Gastrocnemius medialis (tissue), 4 donors: ENCODE measurements at regions of chr1 and their contacts with region 1.

Region 1: DNA sequence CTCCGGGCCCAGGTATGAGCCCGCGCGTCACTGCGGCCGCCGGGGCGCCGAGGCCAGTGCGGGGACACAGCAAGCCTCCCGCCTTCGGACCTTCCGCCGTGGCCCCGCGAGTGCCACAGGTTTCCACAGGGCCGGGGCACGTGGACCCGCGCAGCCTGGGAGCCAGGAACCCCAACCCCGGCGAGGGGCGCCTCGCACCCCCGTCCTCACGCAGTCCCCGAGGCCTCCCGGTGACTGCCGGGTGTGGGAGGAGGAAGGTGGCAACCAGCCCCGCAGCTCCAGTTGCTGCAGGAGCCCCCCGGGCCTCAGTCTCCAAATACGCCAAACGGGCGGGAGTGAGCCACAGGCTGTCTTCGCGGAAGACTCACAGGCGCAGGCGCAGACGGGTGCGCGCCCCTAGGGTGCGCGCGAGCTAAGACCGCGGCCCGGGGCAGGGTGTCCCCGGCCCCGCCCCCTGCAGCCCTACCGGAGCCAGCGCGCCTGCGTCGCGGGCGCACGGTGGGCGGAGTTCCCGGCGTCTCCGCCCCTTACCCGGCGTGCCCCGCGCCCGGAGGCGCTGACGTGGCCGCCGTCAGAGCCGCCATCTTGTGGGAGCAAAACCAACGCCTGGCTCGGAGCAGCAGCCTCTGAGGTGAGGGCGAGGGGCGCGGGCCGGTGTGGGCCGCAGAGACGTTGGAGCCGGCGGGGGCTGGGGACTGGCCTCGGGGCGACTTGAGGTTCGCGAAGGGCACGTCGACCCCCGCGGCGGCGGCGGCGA is at the start of gene ARF1:
- DNase-seq: peak; percentile 83 to 86
- ATAC-seq: peak; percentile 75 to 76
- H3K4me3 ChIP-seq: peak within 1 kb of the TSS; percentile 70 to 94 (median 93)
- H3K27ac ChIP-seq: peak within 1 kb of the TSS; percentile 89 to 96 (median 92)
- H3K4me1 ChIP-seq: peaks cover 41 to 47% of the 10 kb centered on the region in 2 donors
- H3K27me3 ChIP-seq: no peaks in the 10 kb centered on the region
- CTCF ChIP-seq: peak in 2 of 5 experiments; percentile 14 to 42
- POLR2A ChIP-seq: peak; percentile 94 to 97
- total RNA-seq, gene ARF1: 234 to 422 (median 306) TPM

Region 2: DNA sequence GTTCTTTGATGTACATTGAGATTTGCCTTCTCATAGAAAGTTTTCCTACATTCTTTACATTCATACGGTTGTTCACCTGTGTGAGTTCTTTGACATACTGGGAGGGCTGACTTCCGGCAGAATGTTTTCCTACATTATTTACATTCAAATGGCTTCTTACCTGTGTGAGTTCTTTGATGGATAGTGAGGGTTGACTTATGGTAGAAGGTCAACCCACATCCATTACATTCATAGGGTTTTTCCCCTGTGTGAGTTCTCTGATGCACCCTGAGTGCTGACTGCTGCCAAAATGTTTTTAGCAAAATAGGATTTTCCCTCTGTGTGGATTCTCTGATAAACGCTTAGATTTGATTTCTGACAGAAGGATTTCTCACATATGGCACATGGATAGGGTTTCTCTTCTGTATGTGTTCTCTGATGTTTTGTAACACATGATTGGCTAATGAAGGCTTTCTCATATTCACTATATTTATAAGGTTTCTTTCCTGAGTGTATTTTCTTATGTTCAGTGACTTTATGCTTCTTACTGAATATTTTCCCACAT is 384.9 kb before region 1 on chr1:
- in situ Hi-C with region 1: no loop called
- intact Hi-C with region 1: no loop called
- DNase-seq: no peak
- ATAC-seq: no peak
- H3K4me3 ChIP-seq: no peak overlapping the region
- H3K27ac ChIP-seq: no peak overlapping the region
- H3K4me1 ChIP-seq: no peaks in the 10 kb centered on the region
- H3K27me3 ChIP-seq: peaks cover 0 to 5% (median 0%) of the 10 kb centered on the region in 3 donors
- CTCF ChIP-seq: no peak
- POLR2A ChIP-seq: no peak

Region 3: GRCh38 chr1:227762233-227762911 is 319.9 kb before region 1 on chr1:
- in situ Hi-C with region 1: loop called in 1 of 4 experiments (anchors 25 kb)
- intact Hi-C with region 1: loop called (anchors 10 kb)
- DNase-seq: peak; percentile 71 to 85
- ATAC-seq: peak; percentile 27 to 40
- H3K4me3 ChIP-seq: no peak overlapping the region
- H3K27ac ChIP-seq: peak overlapping the region; percentile 90 to 95 (median 92)
- H3K4me1 ChIP-seq: peaks cover 48 to 54% of the 10 kb centered on the region in 2 donors
- H3K27me3 ChIP-seq: no peaks in the 10 kb centered on the region
- CTCF ChIP-seq: peak; percentile 91 to 94 (median 93)
- POLR2A ChIP-seq: no peak

Region 4: DNA sequence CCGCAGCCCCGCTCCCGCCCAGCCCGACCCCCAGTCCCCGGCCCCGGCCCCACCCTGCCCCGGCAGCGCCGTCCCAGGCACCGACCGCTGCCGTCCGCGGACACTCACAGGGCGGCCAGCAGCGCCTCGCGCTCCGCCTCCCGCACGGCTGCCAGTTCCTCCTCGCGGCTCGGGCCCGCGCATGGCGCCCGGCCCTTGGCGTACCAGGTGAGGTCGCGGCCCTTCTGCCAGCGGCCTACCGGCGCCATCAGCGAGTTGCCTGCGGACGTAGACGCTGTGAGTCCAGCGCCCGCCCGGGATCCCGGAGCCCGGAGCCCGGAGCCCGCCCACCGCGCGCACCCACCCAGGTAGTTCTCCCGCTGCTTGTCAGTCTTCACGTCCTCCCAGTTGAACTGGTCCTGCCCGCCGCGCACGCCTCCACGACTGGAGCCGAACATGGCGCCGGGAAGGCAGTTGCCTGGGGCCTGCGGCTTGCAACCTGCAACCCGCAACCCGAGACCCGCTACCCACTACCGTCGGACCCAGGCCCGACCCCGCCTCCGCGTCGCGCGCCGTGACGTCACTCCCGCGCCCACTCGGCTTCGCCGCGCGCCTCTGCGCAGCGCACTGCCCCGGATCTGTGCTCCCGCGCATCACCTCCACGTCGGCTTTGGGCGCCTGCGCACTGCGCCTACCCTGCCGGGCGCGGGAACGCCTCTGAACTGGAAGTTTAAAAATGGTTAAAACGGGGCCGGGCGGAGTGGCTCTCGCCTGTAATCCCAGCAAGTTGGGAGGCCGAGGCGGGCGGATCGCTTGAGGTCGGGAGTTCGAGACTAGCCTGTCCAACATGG is 20.7 kb after region 1 on chr1 and contains the start of gene C1orf35:
- in situ Hi-C with region 1: no loop called
- intact Hi-C with region 1: loop called (anchors 1 kb)
- DNase-seq: peak; percentile 80 to 89
- ATAC-seq: peak; percentile 84 to 86
- H3K4me3 ChIP-seq: peak within 1 kb of the TSS; percentile 69 to 98 (median 86)
- H3K27ac ChIP-seq: peak within 1 kb of the TSS; percentile 81 to 97 (median 90)
- H3K4me1 ChIP-seq: peaks cover 15 to 25% of the 10 kb centered on the region in 2 donors
- H3K27me3 ChIP-seq: no peaks in the 10 kb centered on the region
- CTCF ChIP-seq: peak in 1 of 5 experiments; percentile 30
- POLR2A ChIP-seq: peak; percentile 50 to 56
- total RNA-seq, gene C1orf35: 5.9 to 11.0 (median 7.8) TPM

Region 5: GRCh38 chr1:228109073-228109961 is 27.0 kb after region 1 on chr1 and contains the start of gene MRPL55:
- in situ Hi-C with region 1: no loop called
- intact Hi-C with region 1: loop called (anchors 1 kb)
- DNase-seq: peak; percentile 95 to 98
- ATAC-seq: peak; percentile 96
- H3K4me3 ChIP-seq: peak within 1 kb of the TSS; percentile 73 to 100 (median 79)
- H3K27ac ChIP-seq: peak within 1 kb of the TSS; percentile 86 to 96 (median 92)
- H3K4me1 ChIP-seq: peaks cover 20% of the 10 kb centered on the region in 2 donors
- H3K27me3 ChIP-seq: no peaks in the 10 kb centered on the region
- CTCF ChIP-seq: peak in 3 of 5 experiments; percentile 14 to 34 (median 29)
- POLR2A ChIP-seq: peak; percentile 92 to 95
- total RNA-seq, gene MRPL55: 64.7 to 123 (median 74.2) TPM

Region 6: DNA sequence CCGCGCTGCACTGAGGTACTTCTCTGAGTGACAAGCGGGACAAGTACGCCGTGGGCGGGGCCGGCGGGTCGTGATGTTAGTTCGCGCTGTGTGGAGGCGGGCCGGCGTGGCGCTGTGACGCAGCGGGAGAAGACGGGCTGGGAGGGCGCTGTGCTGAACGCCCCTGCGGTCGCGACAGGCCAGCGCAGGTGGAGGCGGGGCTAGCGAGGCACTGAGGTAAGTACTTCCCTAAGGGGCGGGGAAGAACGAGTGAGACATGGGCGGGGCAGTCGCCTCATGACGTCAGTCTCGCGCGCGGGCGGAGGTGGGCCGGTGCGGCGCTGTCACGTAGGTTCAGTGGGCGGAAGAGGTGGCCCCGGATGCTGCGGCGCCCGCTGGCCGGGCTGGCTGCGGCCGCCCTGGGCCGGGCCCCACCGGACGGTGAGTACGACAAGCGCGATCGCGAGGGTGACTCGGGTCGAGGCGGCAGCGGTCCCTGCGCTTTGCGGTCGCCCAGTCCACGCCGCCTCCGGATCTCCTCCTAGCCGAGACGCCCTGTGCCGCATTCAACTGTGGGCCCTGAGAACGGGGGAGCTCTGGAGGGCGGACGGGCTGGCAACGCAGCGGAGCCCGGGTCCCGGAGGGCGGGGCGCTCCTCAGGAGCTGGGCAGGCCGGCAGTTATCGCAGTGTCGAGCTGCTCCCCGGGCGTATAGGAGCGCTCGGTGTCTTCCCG is 57.8 kb after region 1 on chr1 and contains the start of gene GUK1:
- in situ Hi-C with region 1: no loop called
- intact Hi-C with region 1: loop called (anchors 2 kb)
- DNase-seq: peak; percentile 100
- ATAC-seq: peak; percentile 89 to 90
- H3K4me3 ChIP-seq: peak within 1 kb of the TSS; percentile 83 to 100 (median 96)
- H3K27ac ChIP-seq: peak within 1 kb of the TSS; percentile 94 to 99 (median 96)
- H3K4me1 ChIP-seq: peaks cover 32 to 37% of the 10 kb centered on the region in 2 donors
- H3K27me3 ChIP-seq: no peaks in the 10 kb centered on the region
- CTCF ChIP-seq: peak in 3 of 5 experiments; percentile 7 to 39 (median 28)
- POLR2A ChIP-seq: peak; percentile 98 to 99
- total RNA-seq, gene GUK1: 161 to 230 (median 183) TPM

Region 7: GRCh38 chr1:228165372-228166169 is 83.3 kb after region 1 on chr1 and contains the start of gene IBA57:
- in situ Hi-C with region 1: no loop called
- intact Hi-C with region 1: loop called (anchors 1 kb)
- DNase-seq: peak; percentile 99
- ATAC-seq: peak; percentile 78 to 80
- H3K4me3 ChIP-seq: peak within 1 kb of the TSS; percentile 64 to 96 (median 66)
- H3K27ac ChIP-seq: peak within 1 kb of the TSS; percentile 97 to 100 (median 99)
- H3K4me1 ChIP-seq: peaks cover 31 to 39% of the 10 kb centered on the region in 2 donors
- H3K27me3 ChIP-seq: no peaks in the 10 kb centered on the region
- CTCF ChIP-seq: peak; percentile 89 to 100 (median 99)
- POLR2A ChIP-seq: peak; percentile 96 to 97
- total RNA-seq, gene IBA57: 4.9 to 15.7 (median 12.3) TPM

Region 8: GRCh38 chr1:229625915-229626831 is 1543.9 kb after region 1 on chr1 and contains the starts of genes TAF5L and URB2:
- in situ Hi-C with region 1: no loop called
- intact Hi-C with region 1: loop called (anchors 10 kb)
- DNase-seq: peak; percentile 80 to 85
- ATAC-seq: peak; percentile 77 to 82
- H3K4me3 ChIP-seq: peak within 1 kb of the TSS; percentile 92 to 100 (median 98)
- H3K27ac ChIP-seq: peak within 1 kb of the TSS; percentile 92 to 99 (median 96)
- H3K4me1 ChIP-seq: peaks cover 49 to 51% of the 10 kb centered on the region in 2 donors
- H3K27me3 ChIP-seq: no peaks in the 10 kb centered on the region
- CTCF ChIP-seq: peak in 3 of 5 experiments; percentile 24 to 35 (median 28)
- POLR2A ChIP-seq: peak; percentile 86 to 91
- total RNA-seq, gene TAF5L: 14.5 to 37.4 (median 24.3) TPM
- total RNA-seq, gene URB2: 9.9 to 20.6 (median 13.4) TPM